ENCODE measurements at regions of chr9 and their contacts with region 1.

Region 1: GRCh38 chr9:3441197-3441816 is 84.5 kb downstream of the RFX3 start:
- DNase-seq: no peak
- ATAC-seq: no peak

Region 2: GRCh38 chr9:2857564-2858198 is 583.6 kb before region 1 on chr9:
- intact Hi-C with region 1: loop called (anchors 5 kb)
- DNase-seq: no peak
- ATAC-seq: peak; percentile 57

Region 3: DNA sequence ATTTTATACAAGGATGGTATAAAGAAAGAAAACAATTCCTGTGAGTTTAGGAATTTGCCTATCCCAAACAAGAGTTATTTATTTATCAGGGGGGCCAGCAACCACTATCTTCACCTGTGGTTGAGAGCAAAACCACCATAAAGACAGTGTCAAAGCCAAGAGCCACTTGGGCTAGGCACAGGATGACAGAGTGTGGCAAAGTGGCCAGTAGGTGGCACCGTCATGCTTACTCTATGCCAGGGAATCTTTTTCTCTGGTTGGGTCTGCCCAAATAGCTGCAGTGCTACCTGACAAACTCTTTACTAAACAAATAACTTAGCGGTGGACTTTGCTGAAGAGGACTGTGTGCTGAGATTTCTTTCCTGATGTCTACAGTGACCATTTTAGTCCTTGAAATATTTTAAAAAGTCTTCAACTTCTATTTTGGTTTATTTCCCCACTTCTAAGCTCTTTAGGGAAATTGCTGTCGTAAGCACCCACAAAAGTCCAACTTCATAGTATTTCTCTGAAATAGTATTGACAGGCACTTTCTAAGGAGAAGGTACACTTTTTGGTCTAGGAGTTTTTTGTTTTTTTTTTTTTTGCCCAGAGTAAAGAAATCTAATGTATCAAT is 200.5 kb before region 1 on chr9:
- intact Hi-C with region 1: loop called (anchors 5 kb)
- DNase-seq: peak; percentile 81
- ATAC-seq: peak; percentile 79

Measured in Right ventricle myocardium inferior (tissue), 1 donor.